ENCODE measurements at regions of chr5 and their contacts with region 1.

Region 1: GRCh38 chr5:160271396-160271795 is 41.0 kb downstream of the CCNJL start:
- DNase-seq: no peak
- ATAC-seq: peak; percentile 37
- H3K4me3 ChIP-seq: no peak overlapping the region
- H3K27ac ChIP-seq: no peak overlapping the region
- H3K4me1 ChIP-seq: no peaks in the 10 kb centered on the region
- H3K27me3 ChIP-seq: no peaks in the 10 kb centered on the region
- CTCF ChIP-seq: no peak

Region 2: DNA sequence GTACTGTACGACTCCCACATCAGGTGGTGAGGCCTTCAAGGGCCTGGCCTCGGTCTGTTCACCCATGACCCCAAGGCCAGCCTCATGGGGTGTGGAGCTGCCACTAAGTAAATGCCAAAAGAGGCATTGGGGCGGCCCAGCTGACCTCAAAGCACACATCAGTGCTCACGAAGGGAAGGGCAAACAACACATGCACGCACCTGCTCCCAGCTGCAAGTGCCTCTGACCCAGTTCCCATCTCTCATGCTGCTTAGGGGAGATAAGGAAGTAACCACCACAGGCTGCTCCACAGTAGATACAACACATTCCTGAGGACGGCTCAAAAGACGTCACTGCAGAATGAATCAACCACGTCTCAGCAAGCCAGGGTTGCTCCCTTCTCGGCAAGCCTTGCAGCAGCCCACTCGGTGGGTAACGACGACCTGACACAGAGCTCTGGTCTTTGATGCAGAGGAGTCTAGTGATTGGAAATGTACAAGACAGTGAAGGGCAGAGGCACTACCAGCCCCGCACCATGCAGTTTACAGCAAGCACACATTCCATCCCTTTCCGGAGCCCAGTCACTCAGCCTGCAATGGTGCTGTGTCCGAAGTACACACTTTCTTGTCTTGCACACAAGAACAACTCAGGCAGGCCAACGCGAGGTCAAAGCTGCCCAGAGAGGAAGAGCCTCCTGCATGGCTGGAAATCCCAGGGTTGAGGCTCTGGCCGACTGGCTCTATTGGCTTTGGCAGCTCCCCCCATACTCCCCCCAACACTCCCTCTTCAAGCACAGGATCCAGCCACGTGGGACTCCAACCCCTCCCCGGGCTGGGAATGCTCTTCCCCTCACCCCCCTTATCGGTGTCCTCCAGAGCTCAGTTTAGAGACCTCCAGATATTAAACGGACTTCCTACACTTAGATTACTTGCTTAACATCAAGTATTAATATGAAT is 10.2 kb before region 1 on chr5:
- CTCF ChIA-PET with region 1: interaction called, 5 read pairs
- POLR2A ChIA-PET with region 1: interaction called, 22 read pairs
- intact Hi-C with region 1: no loop called
- DNase-seq: peak; percentile 27
- ATAC-seq: no peak
- H3K4me3 ChIP-seq: no peak overlapping the region
- H3K27ac ChIP-seq: peak overlapping the region; percentile 61
- H3K4me1 ChIP-seq: no peaks in the 10 kb centered on the region
- H3K27me3 ChIP-seq: no peaks in the 10 kb centered on the region
- CTCF ChIP-seq: no peak